BJ (cell line): ENCODE measurements at regions of chr7 and their contacts with region 1.

Region 1: GRCh38 chr7:55086413-55087201 is 67.8 kb downstream of the EGFR start:
- DNase-seq: no peak
- H3K4me3 ChIP-seq: peak overlapping the region; percentile 32
- H3K27me3 ChIP-seq: no peaks in the 10 kb centered on the region
- CTCF ChIP-seq: no peak

Region 2: GRCh38 chr7:54978364-54979118 is 108.1 kb before region 1 on chr7:
- CTCF ChIA-PET with region 1: no interaction called
- POLR2A ChIA-PET with region 1: no interaction called
- DNase-seq: no peak
- H3K4me3 ChIP-seq: no peak overlapping the region
- H3K27me3 ChIP-seq: no peaks in the 10 kb centered on the region
- CTCF ChIP-seq: no peak

Region 3: GRCh38 chr7:55065079-55065478 is 21.5 kb before region 1 on chr7:
- CTCF ChIA-PET with region 1: interaction called, 4 read pairs
- POLR2A ChIA-PET with region 1: interaction called, 18 read pairs
- DNase-seq: peak; percentile 85
- H3K4me3 ChIP-seq: no peak overlapping the region
- H3K27me3 ChIP-seq: no peaks in the 10 kb centered on the region
- CTCF ChIP-seq: no peak